Ascending aorta (tissue), 2 donors: ENCODE measurements at regions of chr1 and their contacts with region 1.

Region 1: GRCh38 chr1:48019714-48020315 is 22.6 kb upstream of the TRABD2B start:
- DNase-seq: peak; percentile 78 to 95
- H3K4me3 ChIP-seq: no peak overlapping the region
- H3K27ac ChIP-seq: peak overlapping the region; percentile 79 to 81
- H3K4me1 ChIP-seq: peaks cover 0 to 27% of the 10 kb centered on the region in 2 donors
- H3K27me3 ChIP-seq: no peaks in the 10 kb centered on the region
- CTCF ChIP-seq: no peak

Region 2: GRCh38 chr1:47527658-47528255 is 492.1 kb before region 1 on chr1:
- intact Hi-C with region 1: loop called (anchors 10 kb)
- DNase-seq: no peak
- H3K4me3 ChIP-seq: no peak overlapping the region
- H3K27ac ChIP-seq: no peak overlapping the region
- H3K4me1 ChIP-seq: peaks cover 0 to 13% of the 10 kb centered on the region in 2 donors
- H3K27me3 ChIP-seq: no peaks in the 10 kb centered on the region
- CTCF ChIP-seq: peak in 2 of 3 experiments; percentile 11 to 19

Region 3: GRCh38 chr1:47948126-47948525 is 71.7 kb before region 1 on chr1:
- intact Hi-C with region 1: no loop called
- DNase-seq: no peak
- H3K4me3 ChIP-seq: no peak overlapping the region
- H3K27ac ChIP-seq: no peak overlapping the region
- H3K4me1 ChIP-seq: no peaks in the 10 kb centered on the region
- H3K27me3 ChIP-seq: no peaks in the 10 kb centered on the region
- CTCF ChIP-seq: no peak

Region 4: DNA sequence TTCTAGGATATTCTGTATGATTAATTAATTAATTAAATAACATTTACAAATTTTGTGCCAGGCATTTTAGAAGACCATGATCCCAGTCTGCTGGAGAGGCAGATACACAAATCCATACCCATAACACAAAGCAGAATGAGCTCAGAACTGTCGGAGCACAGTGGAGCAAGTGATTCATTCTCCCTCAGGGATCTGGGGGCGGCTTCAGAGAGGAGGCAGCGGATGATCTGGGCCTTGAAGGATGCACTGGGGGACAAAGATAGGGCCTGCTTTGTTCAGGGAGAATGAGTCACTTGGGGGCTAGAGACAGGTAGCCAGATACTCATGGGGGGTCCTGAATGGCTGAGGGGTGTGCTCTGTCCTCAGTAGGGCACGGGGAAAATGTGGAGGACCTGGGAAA is 28.2 kb after region 1 on chr1:
- intact Hi-C with region 1: loop called (anchors 1 kb)
- DNase-seq: peak; percentile 16 to 72
- H3K4me3 ChIP-seq: no peak overlapping the region
- H3K27ac ChIP-seq: peak overlapping the region; percentile 82 to 88
- H3K4me1 ChIP-seq: peaks cover 15 to 32% of the 10 kb centered on the region in 2 donors
- H3K27me3 ChIP-seq: no peaks in the 10 kb centered on the region
- CTCF ChIP-seq: no peak